Right cardiac atrium (tissue), 5 donors: ENCODE measurements at regions of chr1 and their contacts with region 1.

Region 1: DNA sequence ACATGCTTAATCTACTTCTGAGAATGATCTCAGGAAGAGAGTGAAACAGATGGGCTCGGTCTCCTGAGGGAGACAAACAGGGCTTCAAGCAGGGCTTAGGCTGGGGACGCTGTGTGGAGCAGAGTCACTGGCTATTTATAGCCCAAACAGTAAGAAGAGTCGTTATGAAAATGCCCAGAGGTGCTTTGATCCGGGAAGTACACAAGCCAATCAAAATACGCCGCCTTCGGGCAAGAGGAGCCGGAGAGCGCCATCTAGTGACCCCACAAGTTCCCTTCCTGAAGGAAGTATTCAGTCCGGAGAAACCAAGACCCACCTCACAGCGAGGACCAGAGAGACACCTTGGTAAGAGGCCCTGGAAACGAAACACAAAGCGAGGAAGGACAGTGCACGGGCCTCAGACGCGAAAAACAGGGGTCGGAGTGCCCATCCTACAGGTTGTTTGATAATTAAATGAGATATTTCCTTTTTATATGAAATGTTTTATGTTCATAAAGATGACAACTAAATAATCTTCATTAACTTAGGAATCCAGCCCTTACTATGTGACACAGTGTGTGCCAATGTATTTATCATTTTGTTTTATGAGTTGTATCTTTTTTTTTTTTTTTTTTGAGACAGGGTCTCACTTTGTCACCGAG is 25.0 kb upstream of the SCCPDH start:
- DNase-seq: peak; percentile 87 to 92 (median 90)
- ATAC-seq: peak; percentile 76 to 92
- H3K4me3 ChIP-seq: no peak overlapping the region
- H3K27ac ChIP-seq: no peak overlapping the region
- H3K4me1 ChIP-seq: no peaks in the 10 kb centered on the region
- H3K27me3 ChIP-seq: no peaks in the 10 kb centered on the region

Region 2: GRCh38 chr1:246428542-246429308 is 270.5 kb before region 1 on chr1:
- intact Hi-C with region 1: no loop called
- DNase-seq: no peak
- ATAC-seq: no peak
- H3K4me3 ChIP-seq: no peak overlapping the region
- H3K27ac ChIP-seq: no peak overlapping the region
- H3K4me1 ChIP-seq: no peaks in the 10 kb centered on the region
- H3K27me3 ChIP-seq: no peaks in the 10 kb centered on the region

Region 3: GRCh38 chr1:246497331-246497915 is 201.8 kb before region 1 on chr1:
- intact Hi-C with region 1: loop called in 3 of 4 experiments (anchors 2 to 10 kb)
- DNase-seq: no peak
- ATAC-seq: peak in 1 of 2 donors; percentile 39
- H3K4me3 ChIP-seq: no peak overlapping the region
- H3K27ac ChIP-seq: no peak overlapping the region
- H3K4me1 ChIP-seq: no peaks in the 10 kb centered on the region
- H3K27me3 ChIP-seq: no peaks in the 10 kb centered on the region

Region 4: DNA sequence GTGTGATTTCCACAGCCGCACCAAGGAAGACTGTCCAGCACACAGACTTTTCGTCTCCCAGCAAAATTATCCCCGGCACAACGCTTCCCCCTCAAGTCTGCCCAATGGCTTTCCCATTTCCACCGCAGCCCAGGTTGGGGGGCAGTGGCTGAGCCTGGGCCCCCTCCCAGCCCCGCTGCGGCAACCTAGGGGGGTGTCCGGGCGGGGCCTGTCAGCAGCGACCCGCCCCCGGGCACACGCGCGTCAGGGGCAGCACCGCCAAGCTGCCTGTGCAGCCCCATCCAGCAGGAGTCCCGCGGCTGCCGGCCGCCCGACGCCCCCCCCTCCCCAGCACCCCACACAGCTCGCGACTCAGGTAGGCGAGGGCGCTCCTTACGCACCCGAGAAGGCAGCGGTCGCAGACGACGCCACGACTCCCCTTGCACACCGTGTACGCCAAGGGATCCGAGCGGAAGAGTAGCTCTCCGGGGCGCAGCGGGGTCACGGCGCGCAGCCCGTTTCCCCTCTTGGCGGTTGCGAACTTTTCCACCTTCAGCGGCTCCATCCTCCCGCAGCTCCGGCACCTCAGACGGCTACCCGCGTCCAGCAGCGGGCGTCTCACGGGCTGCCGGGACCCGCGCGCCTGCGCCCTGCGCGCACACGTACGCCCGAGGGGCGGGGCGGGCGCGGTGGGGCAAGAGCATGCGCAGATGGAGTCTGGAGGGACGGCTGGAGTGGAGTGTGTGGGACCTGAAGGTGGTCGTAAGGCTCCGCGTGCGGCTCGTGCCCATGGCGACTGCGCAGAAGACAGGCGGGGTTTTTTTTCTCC is 192.3 kb before region 1 on chr1 and contains the start of gene SMYD3:
- intact Hi-C with region 1: loop called in 2 of 4 experiments (anchors 5 to 10 kb)
- DNase-seq: peak; percentile 83 to 93 (median 91)
- ATAC-seq: peak; percentile 98 to 99
- H3K4me3 ChIP-seq: peak within 1 kb of the TSS; percentile 83
- H3K27ac ChIP-seq: peak within 1 kb of the TSS; percentile 55
- H3K4me1 ChIP-seq: no peaks in the 10 kb centered on the region
- H3K27me3 ChIP-seq: no peaks in the 10 kb centered on the region
- total RNA-seq, gene SMYD3: 9.1 to 11.6 (median 10.0) TPM

Region 5: DNA sequence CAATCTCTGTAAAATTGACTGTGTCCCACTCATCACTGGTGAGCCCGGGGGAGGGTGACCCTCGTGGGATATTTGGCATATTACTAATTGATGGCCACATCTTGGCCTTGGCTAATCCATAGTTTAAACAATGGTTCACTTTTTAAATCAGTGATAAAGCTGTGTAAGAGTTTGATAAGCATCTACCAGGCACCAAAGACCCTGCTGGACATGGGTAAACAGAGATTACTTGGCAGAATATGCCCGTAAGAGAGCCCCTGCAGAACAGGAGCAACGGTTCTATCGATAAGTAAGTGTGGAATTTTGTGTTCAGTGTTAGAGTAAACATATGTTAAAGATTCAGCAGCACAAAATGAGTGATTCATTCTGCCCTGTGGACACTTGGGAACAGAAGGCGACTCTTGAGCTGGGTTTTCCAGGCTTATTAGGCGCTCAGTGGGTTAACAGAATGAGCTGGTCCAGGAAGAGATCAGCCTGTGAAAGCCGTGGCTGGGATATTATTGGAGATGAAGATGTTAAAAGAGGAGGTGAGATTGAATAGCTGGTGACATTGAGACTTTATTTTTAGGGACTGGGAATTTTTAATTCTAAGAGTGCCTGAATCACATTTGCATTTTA is 77.1 kb before region 1 on chr1:
- intact Hi-C with region 1: no loop called
- DNase-seq: no peak
- ATAC-seq: peak in 1 of 2 donors; percentile 53
- H3K4me3 ChIP-seq: no peak overlapping the region
- H3K27ac ChIP-seq: peak overlapping the region; percentile 52
- H3K4me1 ChIP-seq: no peaks in the 10 kb centered on the region
- H3K27me3 ChIP-seq: no peaks in the 10 kb centered on the region

Region 6: DNA sequence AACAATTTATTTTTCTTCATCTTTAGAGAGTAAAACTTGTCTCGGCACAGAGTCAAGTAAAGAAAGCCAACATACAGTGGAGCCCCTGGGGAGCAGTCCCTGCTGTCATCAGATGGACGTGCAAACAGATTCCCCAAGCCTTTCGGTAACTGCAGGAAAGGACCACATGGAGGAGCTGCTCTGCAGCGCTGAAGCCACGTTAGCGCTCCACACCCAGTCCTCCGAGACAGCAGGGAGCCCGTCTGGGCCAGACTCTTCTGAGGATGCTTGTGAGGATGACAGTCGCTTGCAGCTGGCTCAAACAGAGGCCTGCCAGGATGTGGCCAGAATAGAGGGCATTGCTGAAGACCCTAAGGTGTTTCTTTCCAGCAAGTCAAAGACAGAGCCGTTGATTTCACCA is 52.1 kb before region 1 on chr1:
- intact Hi-C with region 1: loop called in 1 of 4 experiments (anchors 5 kb)
- DNase-seq: peak; percentile 67 to 88 (median 87)
- ATAC-seq: peak; percentile 96
- H3K4me3 ChIP-seq: peak overlapping the region; percentile 33
- H3K27ac ChIP-seq: peak overlapping the region; percentile 70
- H3K4me1 ChIP-seq: peaks cover 2% of the 10 kb centered on the region
- H3K27me3 ChIP-seq: no peaks in the 10 kb centered on the region